Activated T-helper 2 cell treated with anti-CD3 and anti-CD28 coated beads, Interferon-gamma antibody, Interleukin-2, Interleukin-4, amounts not matched to agents 10 μg/mL and 5 μg/mL and 100 μg/mL, durations not matched to agents 14 hours and 24 hours and 36 hours (primary cell): ENCODE measurements at regions of chr6 and their contacts with region 1.

Region 1: DNA sequence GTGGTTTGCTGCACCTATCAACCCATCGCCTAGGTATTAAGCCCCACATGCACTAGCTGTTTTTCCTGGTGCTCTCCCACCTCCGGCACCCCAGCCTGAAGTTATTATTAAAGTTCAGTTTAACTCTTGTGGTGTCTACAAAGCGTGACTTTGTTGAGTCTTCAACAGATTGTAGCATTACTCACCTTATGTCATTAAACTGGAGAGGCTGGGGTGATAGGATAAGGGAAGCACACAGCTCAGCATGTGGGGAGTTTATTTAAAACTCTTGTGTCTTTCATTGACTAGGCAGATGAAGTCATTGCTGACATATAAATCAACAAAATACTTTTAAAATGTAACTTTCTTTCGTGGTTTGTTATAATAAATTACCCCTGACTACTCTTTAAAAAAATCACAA is 84.7 kb upstream of the GCM1 start:
- DNase-seq: no peak
- H3K4me3 Mint-ChIP-seq: no peak overlapping the region
- H3K27ac Mint-ChIP-seq: no peak overlapping the region
- H3K4me1 Mint-ChIP-seq: peaks cover 26% of the 10 kb centered on the region
- H3K27me3 Mint-ChIP-seq: no peaks in the 10 kb centered on the region

Region 2: GRCh38 chr6:53189554-53189953 is 43.8 kb before region 1 on chr6:
- intact Hi-C with region 1: loop called (anchors 5 kb)
- DNase-seq: no peak
- H3K4me3 Mint-ChIP-seq: no peak overlapping the region
- H3K27ac Mint-ChIP-seq: no peak overlapping the region
- H3K4me1 Mint-ChIP-seq: peaks cover 7% of the 10 kb centered on the region
- H3K27me3 Mint-ChIP-seq: peaks cover 5% of the 10 kb centered on the region

Region 3: GRCh38 chr6:53269827-53270226 is 36.5 kb after region 1 on chr6:
- intact Hi-C with region 1: loop called (anchors 1 kb)
- DNase-seq: no peak
- H3K4me3 Mint-ChIP-seq: no peak overlapping the region
- H3K27ac Mint-ChIP-seq: no peak overlapping the region
- H3K4me1 Mint-ChIP-seq: peaks cover 18% of the 10 kb centered on the region
- H3K27me3 Mint-ChIP-seq: no peaks in the 10 kb centered on the region

Region 4: GRCh38 chr6:53300656-53301551 is 67.6 kb after region 1 on chr6:
- intact Hi-C with region 1: loop called (anchors 5 kb)
- DNase-seq: no peak
- H3K4me3 Mint-ChIP-seq: no peak overlapping the region
- H3K27ac Mint-ChIP-seq: peak overlapping the region; percentile 12
- H3K4me1 Mint-ChIP-seq: peaks cover 69% of the 10 kb centered on the region
- H3K27me3 Mint-ChIP-seq: no peaks in the 10 kb centered on the region